Common myeloid progenitor, CD34-positive (primary cell): ENCODE measurements at regions of chr16 and their contacts with region 1.

Region 1: DNA sequence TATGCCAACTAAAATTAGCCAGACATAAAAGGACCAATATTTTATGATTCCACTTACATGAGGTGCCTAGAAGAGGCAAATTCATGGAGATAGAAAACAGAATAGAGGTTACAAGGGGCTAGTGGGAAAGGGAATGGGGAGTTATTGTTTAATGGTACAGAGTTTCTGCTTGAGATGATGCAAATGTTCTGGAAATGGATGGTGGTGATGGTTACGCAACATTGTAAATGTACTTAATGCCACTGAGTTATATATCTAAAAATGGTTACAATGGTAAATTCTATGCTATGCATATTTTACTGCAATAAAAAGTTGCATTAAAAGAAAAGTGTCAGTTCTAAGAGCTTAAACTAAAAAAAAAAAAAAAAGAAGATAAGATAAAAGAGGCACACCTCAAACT is 17.9 kb downstream of the MT1X start:
- DNase-seq: no peak
- H3K4me3 ChIP-seq: no peak overlapping the region
- H3K27ac ChIP-seq: no peak overlapping the region
- H3K4me1 ChIP-seq: no peaks in the 10 kb centered on the region
- H3K27me3 ChIP-seq: no peaks in the 10 kb centered on the region

Region 2: GRCh38 chr16:56513972-56514371 is 186.2 kb before region 1 on chr16:
- CTCF ChIA-PET with region 1: interaction called, 11 read pairs
- POLR2A ChIA-PET with region 1: no interaction called
- DNase-seq: peak; percentile 80 to 85 (median 84)
- H3K4me3 ChIP-seq: no peak overlapping the region
- H3K27ac ChIP-seq: no peak overlapping the region
- H3K4me1 ChIP-seq: peaks cover 0 to 9% (median 2%) of the 10 kb centered on the region in 4 experiments
- H3K27me3 ChIP-seq: no peaks in the 10 kb centered on the region

Region 3: DNA sequence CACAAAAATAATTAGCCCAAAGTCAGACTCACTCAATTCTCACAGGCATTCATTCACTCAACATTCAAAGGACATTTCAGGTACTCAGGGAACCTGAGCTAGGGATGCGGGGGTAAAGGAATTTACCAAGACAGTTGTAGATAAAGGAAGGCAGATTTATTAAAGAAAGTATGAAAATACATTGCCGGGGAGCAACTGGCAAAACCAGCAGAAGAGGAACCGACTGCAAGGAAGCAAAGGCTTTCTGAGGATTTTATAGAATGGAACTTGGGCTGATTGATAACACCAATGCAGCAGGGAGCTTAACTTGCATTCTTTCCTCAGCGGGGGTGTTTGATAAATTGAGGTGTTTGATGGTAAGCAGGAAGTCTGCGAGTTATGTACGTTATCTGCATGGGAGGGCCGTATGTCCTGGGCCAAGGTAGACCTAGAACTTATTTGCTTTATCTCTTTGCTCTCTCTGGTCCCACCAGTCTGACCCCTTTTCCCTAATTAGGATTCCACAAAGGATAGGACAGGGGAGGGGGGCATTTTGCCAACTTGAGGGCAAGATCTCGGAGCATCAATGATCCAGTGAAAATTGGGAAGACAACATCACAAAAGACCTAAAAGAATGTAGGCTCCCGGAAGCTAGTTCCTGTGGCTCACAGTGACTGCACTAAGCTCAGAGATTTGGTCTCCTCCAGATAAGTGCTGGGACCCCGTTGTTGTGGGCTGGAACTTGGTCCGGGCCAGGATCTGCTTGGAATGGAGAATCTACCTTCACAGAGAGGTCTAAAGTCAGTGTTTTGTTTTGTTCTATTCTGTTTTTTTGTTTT is 116.6 kb before region 1 on chr16:
- CTCF ChIA-PET with region 1: interaction called, 36 read pairs
- POLR2A ChIA-PET with region 1: no interaction called
- DNase-seq: no peak
- H3K4me3 ChIP-seq: no peak overlapping the region
- H3K27ac ChIP-seq: no peak overlapping the region
- H3K4me1 ChIP-seq: peaks cover 0 to 11% (median 3%) of the 10 kb centered on the region in 4 experiments
- H3K27me3 ChIP-seq: peaks cover 2 to 24% (median 13%) of the 10 kb centered on the region in 5 experiments

Region 4: DNA sequence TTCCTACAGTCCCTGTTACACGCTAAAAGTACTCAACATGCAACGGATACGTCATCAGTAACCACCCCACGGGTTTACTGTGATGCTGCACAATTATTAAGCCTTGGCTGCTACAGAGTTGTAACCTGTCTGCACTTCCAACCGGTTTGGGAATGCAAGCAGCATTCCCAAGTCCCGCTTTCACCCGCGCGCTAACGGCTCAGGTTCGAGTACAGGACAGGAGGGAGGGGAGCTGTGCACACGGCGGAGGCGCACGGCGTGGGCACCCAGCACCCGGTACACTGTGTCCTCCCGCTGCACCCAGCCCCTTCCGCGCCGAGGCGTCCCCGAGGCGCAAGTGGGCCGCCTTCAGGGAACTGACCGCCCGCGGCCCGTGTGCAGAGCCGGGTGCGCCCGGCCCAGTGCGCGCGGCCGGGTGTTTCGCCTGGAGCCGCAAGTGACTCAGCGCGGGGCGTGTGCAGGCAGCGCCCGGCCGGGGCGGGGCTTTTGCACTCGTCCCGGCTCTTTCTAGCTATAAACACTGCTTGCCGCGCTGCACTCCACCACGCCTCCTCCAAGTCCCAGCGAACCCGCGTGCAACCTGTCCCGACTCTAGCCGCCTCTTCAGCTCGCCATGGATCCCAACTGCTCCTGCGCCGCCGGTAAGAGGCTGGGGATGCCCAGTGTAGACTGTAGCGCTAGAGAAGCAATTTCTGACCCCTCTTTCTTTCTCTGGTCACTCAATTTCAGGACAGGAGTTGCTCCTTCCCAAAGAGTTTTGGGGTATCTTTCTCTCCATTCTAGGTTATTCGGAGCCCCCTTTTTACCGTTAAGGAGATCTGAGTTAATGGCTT is 91.9 kb before region 1 on chr16 and contains the start of gene MT2A:
- CTCF ChIA-PET with region 1: interaction called, 41 read pairs
- POLR2A ChIA-PET with region 1: interaction called, 5 read pairs
- DNase-seq: peak; percentile 94 to 96 (median 95)
- H3K4me3 ChIP-seq: peak within 1 kb of the TSS; percentile 43 to 94 (median 80)
- H3K27ac ChIP-seq: peak within 1 kb of the TSS in 1 of 2 experiments; percentile 70
- H3K4me1 ChIP-seq: peaks cover 7 to 36% (median 33%) of the 10 kb centered on the region in 4 experiments
- H3K27me3 ChIP-seq: peaks cover 0 to 4% (median 0%) of the 10 kb centered on the region in 5 experiments

Region 5: GRCh38 chr16:56715120-56715519 is 14.9 kb after region 1 on chr16:
- CTCF ChIA-PET with region 1: interaction called, 23 read pairs
- POLR2A ChIA-PET with region 1: no interaction called
- DNase-seq: no peak
- H3K4me3 ChIP-seq: no peak overlapping the region
- H3K27ac ChIP-seq: no peak overlapping the region
- H3K4me1 ChIP-seq: no peaks in the 10 kb centered on the region
- H3K27me3 ChIP-seq: peaks cover 0 to 2% (median 0%) of the 10 kb centered on the region in 5 experiments